Activated CD8-positive, alpha-beta T cell treated with anti-CD3 and anti-CD28 coated beads for 36 hours (primary cell): ENCODE measurements at regions of chr15 and their contacts with region 1.

Region 1: GRCh38 chr15:100341662-100342560 is at the start of gene ADAMTS17:
- DNase-seq: peak; percentile 96
- ATAC-seq: peak; percentile 96
- H3K4me3 Mint-ChIP-seq: peak within 1 kb of the TSS; percentile 65
- H3K27ac Mint-ChIP-seq: no peak within 1 kb of the TSS
- H3K4me1 Mint-ChIP-seq: peaks cover 15% of the 10 kb centered on the region
- H3K27me3 Mint-ChIP-seq: peaks cover 7% of the 10 kb centered on the region
- CTCF ChIP-seq: peak; percentile 85
- total RNA-seq, gene ADAMTS17: 0.60 to 1.5 TPM

Region 2: DNA sequence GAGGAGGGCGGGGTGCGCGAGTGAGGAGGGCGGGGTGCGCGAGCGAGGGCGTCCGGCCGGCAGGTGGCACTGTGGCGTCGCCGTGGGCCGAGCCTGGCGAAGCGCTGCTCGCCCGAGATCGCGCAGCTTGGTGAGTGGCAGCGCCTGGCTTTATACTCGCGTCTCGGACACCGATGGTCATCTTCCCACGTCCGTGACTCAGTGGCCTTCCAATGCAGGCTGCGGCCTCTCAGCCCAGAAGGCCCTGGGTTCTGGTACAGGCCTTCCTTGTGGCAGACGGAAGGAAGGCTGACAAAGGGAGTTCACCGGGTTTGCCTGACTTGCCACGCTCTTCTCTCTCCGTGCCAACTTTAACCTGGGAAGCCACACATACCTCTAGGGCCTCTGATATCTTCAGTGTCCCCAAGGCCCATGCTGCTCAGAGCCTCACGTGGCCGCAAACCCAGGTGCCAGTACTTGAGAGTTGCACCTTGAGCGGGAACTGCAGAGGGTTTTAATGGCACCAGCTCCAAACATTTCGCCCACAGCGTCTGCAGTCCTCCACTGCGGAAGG is 413.4 kb before region 1 on chr15:
- CTCF ChIA-PET with region 1: interaction called, 36 read pairs
- POLR2A ChIA-PET with region 1: no interaction called
- intact Hi-C with region 1: loop called (anchors 5 kb)
- DNase-seq: peak; percentile 86
- ATAC-seq: peak; percentile 93
- H3K4me3 Mint-ChIP-seq: peak overlapping the region; percentile 80
- H3K27ac Mint-ChIP-seq: peak overlapping the region; percentile 85
- H3K4me1 Mint-ChIP-seq: peaks cover 9% of the 10 kb centered on the region
- H3K27me3 Mint-ChIP-seq: peaks cover 4% of the 10 kb centered on the region
- CTCF ChIP-seq: peak; percentile 72

Region 3: DNA sequence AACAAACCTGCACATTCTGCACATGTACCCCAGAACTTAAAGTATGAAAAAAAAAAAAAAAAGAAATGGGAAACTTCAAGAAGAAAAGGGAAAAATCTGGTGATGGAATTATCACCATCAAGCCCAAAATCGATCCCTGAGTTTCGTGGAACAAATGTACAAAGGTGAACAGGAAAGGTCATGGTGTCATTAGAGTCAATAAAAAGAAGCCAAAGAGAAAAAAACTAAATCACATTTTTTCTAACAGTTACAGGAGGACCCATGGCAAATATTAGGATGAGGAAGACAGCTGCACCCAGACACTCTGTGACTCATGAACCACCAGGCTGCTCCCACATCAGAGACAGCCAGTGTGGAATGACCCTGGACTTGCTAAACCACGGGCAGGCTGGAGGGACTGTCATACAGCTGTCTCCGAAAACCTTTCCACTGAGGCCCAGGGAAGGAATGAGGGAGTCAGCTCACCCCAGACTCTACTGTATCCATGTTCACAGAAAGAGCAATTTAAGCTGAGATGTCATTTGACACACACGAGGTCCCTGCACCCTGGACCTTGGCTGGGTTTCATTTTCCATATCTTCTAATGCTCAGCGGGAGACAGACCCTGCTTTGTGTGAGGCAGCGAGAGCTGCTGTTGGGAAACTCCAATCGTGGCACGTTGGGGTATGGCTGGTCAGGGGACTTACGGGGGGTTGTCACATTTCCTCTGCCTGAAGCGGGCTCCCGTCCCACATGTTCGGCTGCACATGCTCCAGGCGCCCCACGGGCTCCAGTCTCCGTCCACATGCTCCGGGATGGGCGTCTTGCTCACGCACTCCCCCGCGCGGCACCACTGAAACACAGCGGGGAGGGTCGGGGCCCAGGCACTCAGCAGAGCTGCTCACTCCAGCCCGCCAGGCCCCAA is 210.3 kb before region 1 on chr15:
- CTCF ChIA-PET with region 1: interaction called, 13 read pairs
- POLR2A ChIA-PET with region 1: no interaction called
- intact Hi-C with region 1: loop called (anchors 10 kb)
- DNase-seq: peak; percentile 49
- ATAC-seq: peak; percentile 77
- H3K4me3 Mint-ChIP-seq: peak overlapping the region; percentile 38
- H3K27ac Mint-ChIP-seq: no peak overlapping the region
- H3K4me1 Mint-ChIP-seq: no peaks in the 10 kb centered on the region
- H3K27me3 Mint-ChIP-seq: no peaks in the 10 kb centered on the region
- CTCF ChIP-seq: peak; percentile 24

Region 4: DNA sequence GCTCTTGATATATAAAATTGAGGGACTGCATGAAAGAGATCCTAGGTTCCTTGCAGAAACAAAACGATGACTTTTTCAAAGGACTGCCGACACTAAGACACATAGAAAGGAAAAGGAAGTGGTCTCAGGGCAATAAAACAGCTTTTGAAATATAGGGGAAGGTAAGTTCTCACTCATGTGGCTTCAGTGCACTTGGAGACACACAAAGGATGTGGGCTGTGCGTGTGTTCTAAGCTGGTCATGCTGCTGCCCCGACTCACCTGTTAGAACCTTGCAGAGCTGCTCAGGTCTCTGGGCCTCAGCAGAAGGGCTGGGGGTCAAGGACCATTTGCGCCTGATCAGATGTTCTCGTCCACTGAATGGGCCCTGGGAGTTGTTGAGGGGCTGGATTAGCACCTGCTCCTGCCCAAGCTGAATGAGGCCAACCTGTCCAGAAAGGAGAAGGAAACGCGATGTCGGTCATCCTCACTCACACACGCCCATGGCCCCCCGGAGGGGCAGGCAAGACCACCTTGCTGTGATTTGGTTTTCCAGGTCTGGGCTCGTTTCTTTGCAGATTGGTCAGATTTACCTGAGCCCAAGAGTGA is 11.2 kb before region 1 on chr15:
- CTCF ChIA-PET with region 1: interaction called, 154 read pairs
- POLR2A ChIA-PET with region 1: interaction called, 5 read pairs
- intact Hi-C with region 1: no loop called
- DNase-seq: peak; percentile 63
- ATAC-seq: peak; percentile 84
- H3K4me3 Mint-ChIP-seq: peak overlapping the region; percentile 55
- H3K27ac Mint-ChIP-seq: peak overlapping the region; percentile 77
- H3K4me1 Mint-ChIP-seq: peaks cover 60% of the 10 kb centered on the region
- H3K27me3 Mint-ChIP-seq: peaks cover 3% of the 10 kb centered on the region
- CTCF ChIP-seq: no peak

Region 5: GRCh38 chr15:100383302-100384107 is 41.6 kb after region 1 on chr15:
- CTCF ChIA-PET with region 1: interaction called, 89 read pairs
- POLR2A ChIA-PET with region 1: no interaction called
- intact Hi-C with region 1: no loop called
- DNase-seq: peak; percentile 36
- ATAC-seq: no peak
- H3K4me3 Mint-ChIP-seq: no peak overlapping the region
- H3K27ac Mint-ChIP-seq: no peak overlapping the region
- H3K4me1 Mint-ChIP-seq: no peaks in the 10 kb centered on the region
- H3K27me3 Mint-ChIP-seq: peaks cover 6% of the 10 kb centered on the region
- CTCF ChIP-seq: peak; percentile 35

Region 6: GRCh38 chr15:100596792-100597191 is 254.9 kb after region 1 on chr15:
- CTCF ChIA-PET with region 1: interaction called, 4 read pairs
- POLR2A ChIA-PET with region 1: interaction called, 3 read pairs
- intact Hi-C with region 1: loop called (anchors 5 kb)
- DNase-seq: peak; percentile 99
- ATAC-seq: peak; percentile 84
- H3K4me3 Mint-ChIP-seq: peak overlapping the region; percentile 72
- H3K27ac Mint-ChIP-seq: peak overlapping the region; percentile 98
- H3K4me1 Mint-ChIP-seq: peaks cover 71% of the 10 kb centered on the region
- H3K27me3 Mint-ChIP-seq: no peaks in the 10 kb centered on the region
- CTCF ChIP-seq: no peak